Heart left ventricle (tissue), 16 donors: ENCODE measurements at regions of chr4 and their contacts with region 1.

Region 1: DNA sequence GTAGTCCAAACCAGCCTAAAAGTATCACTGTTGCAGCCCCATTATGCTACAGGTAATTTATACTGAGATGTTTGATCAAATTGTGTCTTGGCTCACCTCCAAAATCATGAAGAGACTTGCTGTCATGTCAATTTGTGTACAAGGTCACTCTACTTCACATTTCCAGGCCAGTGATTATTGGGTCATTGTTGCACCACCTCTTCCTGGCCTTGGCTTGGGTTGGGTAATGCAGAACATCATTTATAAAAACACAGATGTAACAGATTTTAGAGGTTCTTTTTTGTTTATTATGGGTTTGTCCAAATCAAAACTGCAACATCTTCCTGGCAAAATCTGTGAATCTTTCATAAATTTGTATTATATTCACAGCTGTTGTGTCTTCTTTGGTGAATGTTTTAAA is 459.5 kb downstream of the ANKRD50 start:
- DNase-seq: no peak
- ATAC-seq: no peak
- H3K4me3 ChIP-seq: no peak overlapping the region
- H3K27ac ChIP-seq: no peak overlapping the region
- H3K4me1 ChIP-seq: no peaks in the 10 kb centered on the region
- H3K27me3 ChIP-seq: no peaks in the 10 kb centered on the region
- CTCF ChIP-seq: no peak
- POLR2A ChIP-seq: no peak

Region 2: GRCh38 chr4:124144238-124144654 is 108.8 kb before region 1 on chr4:
- intact Hi-C with region 1: loop called in 1 of 10 experiments (anchors 10 kb)
- DNase-seq: no peak
- ATAC-seq: no peak
- H3K4me3 ChIP-seq: no peak overlapping the region
- H3K27ac ChIP-seq: peak overlapping the region in 1 of 12 donors; percentile 8
- H3K4me1 ChIP-seq: peaks cover 0 to 31% (median 10%) of the 10 kb centered on the region in 12 donors
- H3K27me3 ChIP-seq: no peaks in the 10 kb centered on the region
- CTCF ChIP-seq: no peak
- POLR2A ChIP-seq: no peak